CD4-positive, alpha-beta memory T cell (primary cell): ENCODE measurements at regions of chr20 and their contacts with region 1.

Region 1: DNA sequence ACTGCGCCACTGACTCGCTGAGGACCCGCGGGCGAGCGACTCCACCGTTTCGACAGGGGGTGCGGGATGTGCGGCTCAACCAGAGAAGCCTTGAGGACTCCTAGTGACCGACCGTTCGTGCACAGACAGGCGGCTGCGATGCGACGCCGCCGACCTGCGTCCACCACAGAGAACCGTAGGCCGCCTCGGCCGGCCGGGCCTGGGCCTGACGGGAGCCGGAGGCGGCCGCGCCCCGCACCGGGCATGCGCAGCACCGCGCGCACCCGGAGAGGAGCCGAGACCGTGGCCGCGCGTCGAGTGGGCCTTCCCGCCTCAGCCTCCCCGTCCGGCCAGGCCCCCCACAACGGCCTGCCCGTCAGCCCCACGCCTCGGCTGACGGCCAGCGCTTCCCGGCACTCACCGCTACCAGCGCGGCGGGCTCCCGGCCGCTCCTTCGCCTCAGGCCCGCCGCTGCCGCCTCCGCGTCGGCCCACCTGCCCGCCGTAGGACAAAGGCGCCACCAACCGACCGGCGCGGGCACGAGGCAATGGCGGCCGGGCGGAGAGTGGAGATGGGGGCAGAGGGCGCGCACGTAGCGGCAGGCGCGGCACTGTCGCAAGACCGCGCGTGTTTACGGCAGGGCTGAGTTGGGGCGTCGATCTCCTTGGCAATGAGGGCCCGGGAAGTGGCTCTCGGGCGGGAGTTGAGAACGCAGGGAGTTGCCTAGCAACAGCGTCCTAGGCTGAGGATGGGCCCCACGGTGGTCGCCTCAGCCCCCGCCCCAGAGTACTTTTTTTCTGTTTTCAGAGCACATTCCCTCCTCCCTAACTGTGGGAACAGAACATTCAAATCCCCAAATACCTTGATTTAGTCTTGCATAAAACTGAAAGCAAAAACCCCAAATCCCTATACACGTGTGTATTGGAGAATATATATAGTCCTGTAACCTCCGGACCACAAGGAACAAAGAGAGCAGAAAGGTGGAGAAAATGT is at the start of gene NCOA5:
- DNase-seq: peak; percentile 93 to 96 (median 95)
- H3K4me3 ChIP-seq: peak within 1 kb of the TSS; percentile 58 to 86
- H3K4me3 Mint-ChIP-seq: peak within 1 kb of the TSS; percentile 88 to 93 (median 89)
- H3K27ac ChIP-seq: peak within 1 kb of the TSS; percentile 93
- H3K27ac Mint-ChIP-seq: peak within 1 kb of the TSS; percentile 86 to 95 (median 93)
- H3K4me1 ChIP-seq: peaks cover 50% of the 10 kb centered on the region
- H3K4me1 Mint-ChIP-seq: peaks cover 31 to 55% (median 47%) of the 10 kb centered on the region in 4 donors
- H3K27me3 ChIP-seq: no peaks in the 10 kb centered on the region
- H3K27me3 Mint-ChIP-seq: no peaks in the 10 kb centered on the region
- total RNA-seq, gene NCOA5: 37.8 to 47.2 TPM

Region 2: GRCh38 chr20:45792332-45792686 is 297.4 kb before region 1 on chr20:
- CTCF ChIA-PET with region 1: no interaction called
- POLR2A ChIA-PET with region 1: interaction called, 3 read pairs
- intact Hi-C with region 1: loop called (anchors 5 kb)
- DNase-seq: no peak
- H3K4me3 ChIP-seq: peak overlapping the region; percentile 79 to 93
- H3K4me3 Mint-ChIP-seq: peak overlapping the region; percentile 85 to 98 (median 93)
- H3K27ac ChIP-seq: peak overlapping the region; percentile 88
- H3K27ac Mint-ChIP-seq: peak overlapping the region; percentile 83 to 99 (median 95)
- H3K4me1 ChIP-seq: peaks cover 16% of the 10 kb centered on the region
- H3K4me1 Mint-ChIP-seq: peaks cover 11 to 18% (median 14%) of the 10 kb centered on the region in 4 donors
- H3K27me3 ChIP-seq: no peaks in the 10 kb centered on the region
- H3K27me3 Mint-ChIP-seq: no peaks in the 10 kb centered on the region

Region 3: GRCh38 chr20:45987108-45987780 is 102.5 kb before region 1 on chr20:
- CTCF ChIA-PET with region 1: interaction called, 5 read pairs
- POLR2A ChIA-PET with region 1: interaction called, 4 read pairs
- intact Hi-C with region 1: loop called (anchors 5 kb)
- DNase-seq: peak; percentile 67 to 76 (median 70)
- H3K4me3 ChIP-seq: no peak overlapping the region
- H3K4me3 Mint-ChIP-seq: no peak overlapping the region
- H3K27ac ChIP-seq: no peak overlapping the region
- H3K27ac Mint-ChIP-seq: no peak overlapping the region
- H3K4me1 ChIP-seq: no peaks in the 10 kb centered on the region
- H3K4me1 Mint-ChIP-seq: peaks cover 0 to 4% (median 3%) of the 10 kb centered on the region in 4 donors
- H3K27me3 ChIP-seq: no peaks in the 10 kb centered on the region
- H3K27me3 Mint-ChIP-seq: no peaks in the 10 kb centered on the region

Region 4: GRCh38 chr20:46013826-46014516 is 75.7 kb before region 1 on chr20:
- CTCF ChIA-PET with region 1: interaction called, 12 read pairs
- POLR2A ChIA-PET with region 1: no interaction called
- intact Hi-C with region 1: loop called (anchors 2 kb)
- DNase-seq: peak; percentile 59 to 82 (median 64)
- H3K4me3 ChIP-seq: peak overlapping the region in 1 of 2 donors; percentile 33
- H3K4me3 Mint-ChIP-seq: peak overlapping the region; percentile 45 to 81 (median 64)
- H3K27ac ChIP-seq: no peak overlapping the region
- H3K27ac Mint-ChIP-seq: peak overlapping the region in 3 of 7 donors; percentile 54 to 78 (median 57)
- H3K4me1 ChIP-seq: peaks cover 50% of the 10 kb centered on the region
- H3K4me1 Mint-ChIP-seq: peaks cover 25 to 67% (median 45%) of the 10 kb centered on the region in 4 donors
- H3K27me3 ChIP-seq: peaks cover 30% of the 10 kb centered on the region
- H3K27me3 Mint-ChIP-seq: peaks cover 26 to 61% of the 10 kb centered on the region in 2 donors

Region 5: DNA sequence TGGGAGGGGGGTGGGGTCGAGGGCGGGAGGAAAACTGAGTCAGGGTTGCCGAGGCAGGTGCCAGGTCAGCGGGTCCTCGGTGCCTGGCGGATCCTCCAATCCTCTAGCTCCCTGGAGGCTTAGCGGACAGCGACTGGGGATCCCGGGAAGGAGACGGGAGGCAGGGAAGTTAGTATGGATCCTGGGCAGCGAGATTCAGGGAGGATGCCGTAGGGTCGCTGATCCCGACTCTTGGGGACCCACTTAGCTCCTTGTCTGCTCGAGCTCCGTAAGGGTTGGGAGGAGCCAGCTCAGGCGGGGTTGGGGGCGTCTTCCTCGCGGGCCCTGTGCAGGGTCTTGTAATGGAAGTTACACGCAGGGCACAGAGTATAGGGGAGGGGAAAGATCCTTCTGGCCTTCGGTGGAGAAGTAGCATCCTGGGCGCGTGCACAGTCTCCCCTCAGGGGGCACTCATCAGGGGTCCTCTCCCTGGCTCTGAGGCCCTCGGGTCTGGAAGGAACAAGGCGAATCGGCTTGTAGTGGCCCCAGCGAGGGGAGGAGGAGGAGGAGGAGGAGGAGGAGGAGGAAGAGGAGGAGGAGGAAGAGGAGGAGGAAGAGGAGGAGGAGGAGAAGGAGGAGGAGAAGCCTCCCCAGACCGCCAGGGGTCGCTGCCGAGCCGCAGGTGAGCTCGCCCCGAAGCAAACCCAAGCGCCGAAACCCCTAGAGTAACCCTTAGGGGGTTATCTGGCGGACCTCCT is 67.1 kb before region 1 on chr20:
- CTCF ChIA-PET with region 1: interaction called, 8 read pairs
- POLR2A ChIA-PET with region 1: no interaction called
- intact Hi-C with region 1: loop called (anchors 1 kb)
- DNase-seq: peak; percentile 59 to 73 (median 62)
- H3K4me3 ChIP-seq: peak overlapping the region; percentile 19 to 57
- H3K4me3 Mint-ChIP-seq: peak overlapping the region; percentile 16 to 82 (median 64)
- H3K27ac ChIP-seq: no peak overlapping the region
- H3K27ac Mint-ChIP-seq: no peak overlapping the region
- H3K4me1 ChIP-seq: peaks cover 16% of the 10 kb centered on the region
- H3K4me1 Mint-ChIP-seq: peaks cover 10 to 30% (median 12%) of the 10 kb centered on the region in 4 donors
- H3K27me3 ChIP-seq: peaks cover 27% of the 10 kb centered on the region
- H3K27me3 Mint-ChIP-seq: peaks cover 25 to 48% of the 10 kb centered on the region in 2 donors

Region 6: GRCh38 chr20:46406199-46406985 is 316.7 kb after region 1 on chr20 and contains the start of gene ELMO2:
- CTCF ChIA-PET with region 1: no interaction called
- POLR2A ChIA-PET with region 1: no interaction called
- intact Hi-C with region 1: loop called (anchors 1 kb)
- DNase-seq: peak; percentile 94 to 98 (median 95)
- H3K4me3 ChIP-seq: peak within 1 kb of the TSS; percentile 64 to 73
- H3K4me3 Mint-ChIP-seq: peak within 1 kb of the TSS; percentile 91 to 99 (median 96)
- H3K27ac ChIP-seq: peak within 1 kb of the TSS; percentile 95
- H3K27ac Mint-ChIP-seq: peak within 1 kb of the TSS; percentile 96 to 99 (median 97)
- H3K4me1 ChIP-seq: peaks cover 63% of the 10 kb centered on the region
- H3K4me1 Mint-ChIP-seq: peaks cover 49 to 83% (median 66%) of the 10 kb centered on the region in 4 donors
- H3K27me3 ChIP-seq: no peaks in the 10 kb centered on the region
- H3K27me3 Mint-ChIP-seq: peaks cover 0 to 3% of the 10 kb centered on the region in 2 donors
- total RNA-seq, gene ELMO2: 65.1 to 70.7 TPM